Left cardiac atrium (tissue), 4 donors: ENCODE measurements at regions of chr12 and their contacts with region 1.

Region 1: GRCh38 chr12:31659087-31659933 is at the start of gene ETFBKMT:
- DNase-seq: peak; percentile 87
- ATAC-seq: peak; percentile 95 to 97
- total RNA-seq, gene ETFBKMT: 4.6 to 5.4 TPM

Region 2: DNA sequence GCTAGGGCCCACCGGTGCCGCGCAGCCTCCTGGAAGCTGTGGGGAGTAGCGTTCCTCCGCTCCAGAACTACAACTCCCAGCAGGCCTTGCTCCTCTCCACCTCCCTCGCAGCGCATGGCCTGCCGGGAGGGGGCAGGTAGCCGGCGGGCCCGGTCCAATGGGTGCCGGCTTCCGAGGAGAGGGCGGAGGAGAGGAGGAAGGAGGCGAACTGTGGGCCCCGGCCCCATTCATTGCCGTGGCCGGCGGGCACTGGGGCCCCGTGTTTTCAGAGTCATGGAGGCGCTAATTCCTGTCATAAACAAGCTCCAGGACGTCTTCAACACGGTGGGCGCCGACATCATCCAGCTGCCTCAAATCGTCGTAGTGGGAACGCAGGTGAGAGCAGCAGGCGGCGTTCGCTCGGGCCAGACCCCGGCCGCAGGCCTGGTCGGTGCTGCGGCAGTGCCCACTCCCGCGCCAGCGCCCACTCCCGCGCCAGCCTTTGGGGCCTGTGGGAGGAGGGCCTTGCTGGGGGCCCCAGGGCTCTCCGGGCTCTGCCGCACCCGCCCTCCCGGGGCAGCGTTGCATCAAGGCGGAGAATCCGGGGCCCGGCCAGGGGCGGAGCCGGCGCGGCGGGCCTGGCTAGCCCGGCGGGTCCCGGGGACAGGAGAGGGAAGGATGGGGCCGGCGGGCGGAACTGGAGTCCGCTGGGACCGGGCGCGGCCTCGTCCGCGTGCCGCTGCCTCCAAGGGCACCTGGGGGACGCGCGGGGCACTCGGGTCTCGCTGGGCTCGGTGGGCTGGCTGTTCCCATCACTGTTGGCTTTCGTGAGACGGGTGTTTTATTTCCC is 1020.0 kb after region 1 on chr12 and contains the start of gene DNM1L:
- intact Hi-C with region 1: loop called in 1 of 2 experiments (anchors 10 kb)
- DNase-seq: peak; percentile 95
- ATAC-seq: peak; percentile 99
- total RNA-seq, gene DNM1L: 55.6 to 69.1 TPM